ENCODE measurements at regions of chr1 and their contacts with region 1.

Region 1: GRCh38 chr1:79193211-79194079 is 186.9 kb upstream of the ADGRL4 start:
- DNase-seq: peak; percentile 19 to 42
- H3K4me3 ChIP-seq: no peak overlapping the region
- H3K27ac ChIP-seq: peak overlapping the region; percentile 77; the same call in 1 of the 2 replicates
- H3K4me1 ChIP-seq: peaks cover 0 to 4% (median 1%) of the 10 kb centered on the region in 4 experiments; a peak in 2 of 7 replicates
- H3K27me3 ChIP-seq: no peaks in the 10 kb centered on the region
- CTCF ChIP-seq: no peak
- EP300 ChIP-seq: no peak
- POLR2A ChIP-seq: 0 out of 3 replicates have a peak, but pooled peaks of 1 of the 2 experiments have one; percentile 40
- RAD21 ChIP-seq: peak in 1 of 2 experiments; percentile 8; a peak in 1 of 4 replicates

Region 2: DNA sequence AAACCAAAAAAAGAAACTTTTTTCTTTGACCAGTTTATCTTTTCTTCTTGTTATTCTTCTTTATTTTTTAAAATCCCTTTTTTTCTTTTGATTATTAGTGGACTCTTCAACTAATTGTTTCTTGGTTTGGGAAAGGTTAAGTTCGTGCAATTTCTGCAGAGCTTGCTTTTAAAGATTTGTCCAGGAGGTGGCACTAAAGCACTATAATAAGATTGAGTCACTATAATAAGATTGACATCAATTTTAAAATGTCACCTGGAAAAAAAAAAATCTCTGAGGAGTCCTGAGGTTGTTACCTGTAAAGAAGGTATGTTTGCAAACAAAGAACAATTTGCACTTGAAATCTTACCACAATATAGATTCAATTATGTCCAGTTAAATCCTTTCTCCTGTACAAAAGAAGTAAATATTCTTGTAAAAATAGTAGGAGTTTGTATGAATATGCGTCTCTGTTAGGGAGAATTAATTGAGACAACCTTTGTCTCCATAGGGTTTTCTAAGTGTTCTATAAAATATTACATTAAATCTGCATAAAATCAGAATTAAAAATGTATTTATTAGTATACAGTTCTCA is 353.7 kb before region 1 on chr1:
- CTCF ChIA-PET with region 1: interaction called, 68 read pairs
- POLR2A ChIA-PET with region 1: no interaction called
- DNase-seq: peak in 1 of 2 experiments; percentile 55
- H3K4me3 ChIP-seq: no peak overlapping the region
- H3K27ac ChIP-seq: no peak overlapping the region
- H3K4me1 ChIP-seq: peaks cover 0 to 4% (median 0%) of the 10 kb centered on the region in 4 experiments; a peak in 2 of 7 replicates
- H3K27me3 ChIP-seq: peaks cover 0 to 2% (median 0%) of the 10 kb centered on the region in 4 experiments; a peak in 1 of 7 replicates
- CTCF ChIP-seq: peak in 2 of 3 experiments; percentile 37 to 40; a peak in 2 of 4 replicates
- EP300 ChIP-seq: no peak
- POLR2A ChIP-seq: no peak
- RAD21 ChIP-seq: peak; percentile 78